Left cardiac atrium (tissue), 4 donors: ENCODE measurements at regions of chr1 and their contacts with region 1.

Region 1: DNA sequence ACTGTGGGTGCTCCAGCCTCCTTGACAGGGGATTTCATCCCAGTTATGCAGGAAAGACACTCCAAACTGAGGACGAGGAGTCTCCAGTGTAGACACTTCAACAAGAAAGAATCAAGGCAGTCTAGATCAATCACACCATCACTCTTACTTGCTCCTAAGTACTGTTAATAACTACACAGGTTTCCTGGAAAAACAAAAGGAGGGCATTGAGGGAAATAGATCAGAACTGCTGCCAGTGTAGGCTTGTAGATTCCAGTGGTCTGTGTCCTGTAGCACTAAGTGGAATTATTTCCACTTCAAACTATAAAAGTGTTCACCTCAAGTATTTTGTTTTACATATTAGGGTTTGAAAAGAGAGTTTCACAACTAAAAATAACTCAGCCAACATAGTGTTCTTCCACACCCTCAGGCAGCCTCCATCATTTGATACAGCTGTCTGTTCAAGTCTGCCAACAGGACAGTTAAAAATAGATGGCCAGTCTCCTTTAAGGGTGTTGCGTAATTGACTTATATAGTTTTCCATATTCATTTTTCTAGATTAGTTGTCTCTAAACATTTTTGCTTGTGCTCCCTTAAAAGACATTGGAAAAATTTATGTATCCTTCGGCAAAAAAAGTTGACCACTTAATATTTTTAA is 32.0 kb upstream of the AGL start:
- DNase-seq: no peak
- ATAC-seq: peak; percentile 74 to 75

Region 2: GRCh38 chr1:99849744-99850458 is 31.7 kb after region 1 on chr1 and contains the start of gene AGL:
- intact Hi-C with region 1: loop called in 1 of 2 experiments (anchors 5 kb)
- DNase-seq: peak; percentile 89
- ATAC-seq: peak; percentile 98 to 99
- total RNA-seq, gene AGL: 37.6 to 39.0 TPM

Region 3: GRCh38 chr1:100866041-100866900 is 1048.1 kb after region 1 on chr1:
- intact Hi-C with region 1: loop called in 1 of 2 experiments (anchors 10 kb)
- DNase-seq: no peak
- ATAC-seq: peak; percentile 62 to 70